Activated B cell treated with CpG ODN at 0.5 μM for 24 hours (primary cell): ENCODE measurements at regions of chr17 and their contacts with region 1.

Region 1: DNA sequence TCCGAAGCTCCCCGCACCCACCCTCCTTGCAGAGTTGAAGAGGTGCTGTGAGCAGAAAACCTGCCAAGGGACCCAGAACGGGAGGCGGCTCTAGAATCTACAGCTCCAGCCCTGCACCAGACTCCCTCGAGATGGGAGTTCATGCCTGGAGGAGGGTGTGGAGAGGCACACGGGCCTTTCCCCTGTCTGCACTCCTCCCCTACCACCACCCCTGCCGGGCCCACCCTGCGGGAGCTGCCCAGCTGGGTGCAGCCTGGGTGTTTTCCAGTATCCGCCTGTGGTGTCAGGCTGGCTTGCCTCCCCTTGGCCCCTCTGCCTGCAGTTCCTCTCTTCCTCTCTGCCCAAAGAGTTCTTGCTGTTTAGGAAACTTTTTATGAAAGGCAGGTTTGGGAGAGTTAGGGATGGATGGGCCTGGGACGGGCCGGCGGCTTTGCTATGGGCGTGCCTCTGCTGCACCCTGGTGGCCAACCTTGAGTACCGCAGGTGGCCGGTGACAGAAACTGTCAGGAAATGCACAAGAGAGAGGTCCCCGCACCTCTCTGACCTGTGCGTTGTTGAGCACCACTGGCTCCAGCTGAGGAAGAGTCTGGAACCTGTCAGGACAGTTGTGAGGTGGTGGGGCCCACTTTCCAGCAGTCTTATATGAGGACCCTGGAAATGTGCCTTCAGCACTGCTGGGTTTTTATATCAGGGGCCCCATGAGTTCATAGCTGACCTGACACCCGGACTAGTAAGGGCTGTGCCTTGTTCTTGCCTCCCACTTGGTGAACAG is 354.1 kb downstream of the SEC14L1 start:
- DNase-seq: peak; percentile 73
- ATAC-seq: peak; percentile 64
- H3K4me3 Mint-ChIP-seq: peak overlapping the region; percentile 15
- H3K27ac Mint-ChIP-seq: peak overlapping the region; percentile 77
- H3K4me1 Mint-ChIP-seq: peaks cover 27% of the 10 kb centered on the region
- H3K27me3 Mint-ChIP-seq: no peaks in the 10 kb centered on the region
- CTCF ChIP-seq: peak; percentile 77

Region 2: DNA sequence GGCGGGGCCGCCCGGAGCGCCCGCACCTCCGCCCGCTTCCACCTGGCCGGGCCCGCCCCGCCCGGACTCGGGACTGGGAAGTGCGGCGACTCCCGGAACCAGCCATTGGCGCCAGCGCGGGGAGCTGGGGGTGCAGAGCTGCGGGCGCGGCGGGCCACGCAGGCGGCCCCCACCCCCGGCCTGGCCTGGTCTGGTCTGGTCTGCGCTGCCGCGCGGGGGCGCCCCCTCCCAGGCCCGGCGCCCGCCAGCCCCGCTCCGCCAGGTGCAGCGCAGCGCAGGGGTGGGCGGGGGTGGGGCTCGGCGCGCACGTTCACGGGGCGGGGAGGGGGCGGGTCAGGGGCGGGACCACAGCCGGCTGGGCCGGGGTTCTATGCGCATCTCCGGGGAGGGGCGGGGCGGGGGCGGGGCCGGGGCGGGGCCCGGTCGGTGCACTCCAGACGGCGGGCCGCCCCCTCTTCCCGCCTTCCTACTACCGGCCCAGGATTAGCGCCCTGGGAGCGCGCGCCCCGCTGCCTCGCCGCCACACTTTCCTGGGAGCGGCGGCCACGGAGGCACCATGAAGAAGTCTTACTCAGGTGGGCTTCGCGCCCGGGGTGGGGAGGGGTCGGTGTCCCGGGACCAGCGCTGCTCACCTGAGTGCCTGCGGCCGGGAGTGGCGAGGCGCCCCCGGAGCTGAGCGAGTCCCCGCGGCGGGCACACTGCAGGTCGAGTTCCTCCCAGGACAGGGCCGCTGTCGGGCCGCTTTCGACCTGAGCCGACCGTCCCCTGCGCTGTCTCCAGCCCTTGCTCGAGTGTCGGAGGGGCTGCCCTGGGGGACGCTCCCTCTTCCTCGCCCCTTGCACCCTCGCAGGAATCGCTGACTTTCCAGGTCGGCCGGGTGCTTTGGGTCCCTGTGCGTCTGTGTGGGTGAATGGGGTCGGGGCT is 213.6 kb before region 1 on chr17:
- CTCF ChIA-PET with region 1: interaction called, 7 read pairs
- POLR2A ChIA-PET with region 1: no interaction called
- intact Hi-C with region 1: loop called (anchors 1 kb)
- DNase-seq: peak; percentile 74
- ATAC-seq: peak; percentile 93
- H3K4me3 Mint-ChIP-seq: peak overlapping the region; percentile 82
- H3K27ac Mint-ChIP-seq: peak overlapping the region; percentile 85
- H3K4me1 Mint-ChIP-seq: peaks cover 30% of the 10 kb centered on the region
- H3K27me3 Mint-ChIP-seq: peaks cover 4% of the 10 kb centered on the region
- CTCF ChIP-seq: no peak

Region 3: DNA sequence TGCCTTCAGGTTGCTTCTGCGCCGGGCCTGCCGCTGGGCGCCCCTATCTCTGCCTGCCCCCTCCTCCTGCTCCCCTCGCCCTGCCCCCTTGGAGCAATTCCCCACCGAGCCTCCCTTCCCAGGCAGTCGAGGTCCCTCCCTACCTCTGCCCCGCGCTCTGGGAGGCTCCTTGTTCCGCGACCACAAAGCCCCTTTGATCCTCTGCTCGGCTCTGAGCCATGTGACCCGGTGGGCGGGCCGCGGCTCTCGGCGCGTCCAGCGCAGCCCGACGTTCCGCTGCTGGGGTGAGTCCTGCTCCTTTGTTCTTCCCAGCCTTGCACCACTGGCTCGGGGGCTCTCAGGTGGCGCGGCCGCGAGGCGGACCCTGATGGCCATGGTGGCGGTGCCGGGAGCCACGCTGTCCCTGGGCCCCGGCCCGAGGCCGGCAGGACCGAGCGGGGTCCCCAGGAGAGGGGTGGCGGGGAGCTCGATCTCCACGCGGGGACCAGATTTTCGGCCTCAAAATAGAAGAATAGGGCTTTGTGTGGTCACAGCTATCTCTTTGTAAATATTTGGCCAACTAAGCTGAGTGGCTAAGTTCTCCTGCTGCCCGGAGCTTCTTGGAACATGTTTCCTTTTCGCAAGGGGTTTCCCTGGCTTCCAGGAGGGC is 43.5 kb before region 1 on chr17:
- CTCF ChIA-PET with region 1: interaction called, 10 read pairs
- POLR2A ChIA-PET with region 1: interaction called, 11 read pairs
- intact Hi-C with region 1: no loop called
- DNase-seq: peak; percentile 65
- ATAC-seq: peak; percentile 59
- H3K4me3 Mint-ChIP-seq: peak overlapping the region; percentile 95
- H3K27ac Mint-ChIP-seq: peak overlapping the region; percentile 99
- H3K4me1 Mint-ChIP-seq: peaks cover 82% of the 10 kb centered on the region
- H3K27me3 Mint-ChIP-seq: no peaks in the 10 kb centered on the region
- CTCF ChIP-seq: no peak

Region 4: DNA sequence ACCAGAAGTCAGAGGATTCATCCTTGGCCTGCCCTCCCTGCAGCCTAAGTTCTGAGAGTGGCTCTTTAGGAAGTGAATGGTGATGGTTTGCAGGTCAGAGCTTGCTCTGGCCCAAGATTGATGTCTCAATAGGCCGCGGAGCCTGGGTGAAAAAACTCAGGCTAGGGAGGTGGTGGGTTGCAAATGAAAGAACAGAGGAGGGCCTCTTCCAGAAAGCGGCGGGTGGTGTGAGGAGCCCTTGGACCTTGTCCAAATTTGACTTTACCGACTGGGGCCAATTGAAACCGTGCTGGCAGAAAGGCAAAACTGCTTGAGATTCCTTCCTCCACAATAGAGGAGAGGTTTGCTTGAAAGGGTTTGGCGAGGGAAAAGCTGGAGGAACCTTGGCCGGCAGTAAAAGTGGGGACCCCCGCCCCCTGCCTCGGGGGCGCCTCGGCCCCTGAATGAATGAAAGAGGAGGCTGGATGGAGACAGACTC is 22.8 kb before region 1 on chr17:
- CTCF ChIA-PET with region 1: interaction called, 11 read pairs
- POLR2A ChIA-PET with region 1: interaction called, 13 read pairs
- intact Hi-C with region 1: no loop called
- DNase-seq: no peak
- ATAC-seq: no peak
- H3K4me3 Mint-ChIP-seq: peak overlapping the region; percentile 72
- H3K27ac Mint-ChIP-seq: peak overlapping the region; percentile 84
- H3K4me1 Mint-ChIP-seq: peaks cover 97% of the 10 kb centered on the region
- H3K27me3 Mint-ChIP-seq: no peaks in the 10 kb centered on the region
- CTCF ChIP-seq: no peak

Region 5: DNA sequence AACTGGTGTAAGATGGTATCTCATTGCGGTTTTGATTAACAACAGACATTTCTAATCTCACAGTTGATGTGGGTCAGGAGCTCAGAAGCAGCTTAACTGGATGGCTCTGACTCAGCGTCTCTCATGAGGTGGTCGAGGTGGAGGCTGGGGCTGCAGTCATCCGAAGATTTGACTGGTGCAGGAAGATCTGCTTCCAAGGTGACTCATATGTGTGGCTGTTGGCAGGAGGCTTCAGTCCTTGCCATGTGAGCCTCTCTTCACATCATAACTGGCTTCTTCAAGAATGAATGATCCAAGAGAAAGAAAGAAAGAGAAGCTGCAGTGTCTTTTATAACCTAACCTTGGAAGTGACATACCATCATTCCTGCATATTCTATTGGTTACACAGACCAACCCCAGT is 22.1 kb after region 1 on chr17:
- CTCF ChIA-PET with region 1: no interaction called
- POLR2A ChIA-PET with region 1: no interaction called
- intact Hi-C with region 1: no loop called
- DNase-seq: no peak
- ATAC-seq: no peak
- H3K4me3 Mint-ChIP-seq: no peak overlapping the region
- H3K27ac Mint-ChIP-seq: no peak overlapping the region
- H3K4me1 Mint-ChIP-seq: no peaks in the 10 kb centered on the region
- H3K27me3 Mint-ChIP-seq: no peaks in the 10 kb centered on the region
- CTCF ChIP-seq: no peak